CD4-positive, alpha-beta memory T cell (primary cell): ENCODE measurements at regions of chr19 and their contacts with region 1.

Region 1: GRCh38 chr19:58218899-58219298 is 9.8 kb upstream of the ZNF544 start:
- DNase-seq: peak in 3 of 5 donors; percentile 36 to 43 (median 40)
- H3K4me3 ChIP-seq: no peak overlapping the region
- H3K4me3 Mint-ChIP-seq: no peak overlapping the region
- H3K27ac ChIP-seq: no peak overlapping the region
- H3K27ac Mint-ChIP-seq: no peak overlapping the region
- H3K4me1 ChIP-seq: no peaks in the 10 kb centered on the region
- H3K4me1 Mint-ChIP-seq: no peaks in the 10 kb centered on the region
- H3K27me3 ChIP-seq: no peaks in the 10 kb centered on the region
- H3K27me3 Mint-ChIP-seq: no peaks in the 10 kb centered on the region

Region 2: DNA sequence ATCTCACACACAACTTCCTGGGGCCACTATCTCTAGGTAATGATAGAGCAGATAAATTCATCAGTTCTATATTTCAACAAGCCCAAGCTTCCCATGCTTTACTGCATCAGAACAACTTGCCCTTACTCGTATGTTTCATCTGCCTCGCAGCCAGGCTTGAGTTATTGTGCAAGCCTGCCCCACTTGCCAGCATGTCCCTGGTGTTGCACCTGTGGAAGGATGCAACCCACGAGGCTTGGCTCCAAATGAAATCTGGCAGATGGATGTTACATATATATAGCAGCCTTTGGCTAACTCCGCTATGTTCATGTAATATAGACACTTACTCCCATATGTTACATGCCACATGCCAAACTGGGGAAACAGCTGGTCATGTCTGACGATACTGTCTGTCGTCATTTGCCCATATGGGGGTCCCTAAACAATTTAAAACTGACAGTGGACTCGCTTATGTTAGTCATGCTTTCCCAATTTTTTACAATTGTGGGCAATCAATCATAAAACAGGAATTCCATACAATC is 92.5 kb after region 1 on chr19:
- CTCF ChIA-PET with region 1: interaction called, 4 read pairs
- POLR2A ChIA-PET with region 1: no interaction called
- intact Hi-C with region 1: loop called (anchors 2 kb)
- DNase-seq: no peak
- H3K4me3 ChIP-seq: no peak overlapping the region
- H3K4me3 Mint-ChIP-seq: no peak overlapping the region
- H3K27ac ChIP-seq: no peak overlapping the region
- H3K27ac Mint-ChIP-seq: peak overlapping the region in 2 of 7 donors; percentile 35 to 64
- H3K4me1 ChIP-seq: peaks cover 15% of the 10 kb centered on the region
- H3K4me1 Mint-ChIP-seq: peaks cover 21 to 40% (median 30%) of the 10 kb centered on the region in 4 donors
- H3K27me3 ChIP-seq: no peaks in the 10 kb centered on the region
- H3K27me3 Mint-ChIP-seq: no peaks in the 10 kb centered on the region